Gastrocnemius medialis (tissue), 4 donors: ENCODE measurements at regions of chr5 and their contacts with region 1.

Region 1: GRCh38 chr5:179907570-179908324 is at the start of gene TBC1D9B:
- DNase-seq: peak in 1 of 2 donors; percentile 49
- ATAC-seq: peak; percentile 80 to 84
- H3K4me3 ChIP-seq: peak within 1 kb of the TSS; percentile 65 to 77 (median 68)
- H3K27ac ChIP-seq: peak within 1 kb of the TSS; percentile 78 to 85 (median 82)
- H3K4me1 ChIP-seq: peaks cover 10 to 25% of the 10 kb centered on the region in 2 donors
- H3K27me3 ChIP-seq: no peaks in the 10 kb centered on the region
- CTCF ChIP-seq: peak in 4 of 5 experiments; percentile 70 to 71 (median 70)
- POLR2A ChIP-seq: peak; percentile 40 to 52
- total RNA-seq, gene TBC1D9B: 56.1 to 65.9 (median 62.7) TPM

Region 2: DNA sequence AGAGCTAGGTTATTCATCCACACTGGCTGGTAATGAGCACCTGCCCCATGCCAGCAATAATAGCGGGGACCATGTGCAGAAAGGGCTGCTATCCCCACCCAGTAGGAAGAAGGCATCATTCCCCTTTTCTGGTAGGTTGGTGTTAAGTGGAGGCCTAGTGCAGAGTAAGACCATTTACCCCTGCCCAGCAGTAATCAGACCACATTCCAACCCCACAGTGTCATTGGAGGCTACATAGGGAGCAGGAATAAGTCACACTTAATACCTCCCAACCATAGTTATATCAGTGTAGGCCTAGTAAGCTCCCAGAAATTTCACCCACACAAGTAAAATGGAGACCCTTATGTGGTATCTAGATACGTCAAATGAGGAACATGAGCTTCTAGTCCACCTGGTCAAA is 1017.7 kb before region 1 on chr5:
- in situ Hi-C with region 1: no loop called
- intact Hi-C with region 1: no loop called
- DNase-seq: no peak
- ATAC-seq: no peak
- H3K4me3 ChIP-seq: no peak overlapping the region
- H3K27ac ChIP-seq: no peak overlapping the region
- H3K4me1 ChIP-seq: no peaks in the 10 kb centered on the region
- H3K27me3 ChIP-seq: no peaks in the 10 kb centered on the region
- CTCF ChIP-seq: no peak
- POLR2A ChIP-seq: no peak

Region 3: GRCh38 chr5:179697993-179698934 is 209.5 kb before region 1 on chr5:
- in situ Hi-C with region 1: no loop called
- intact Hi-C with region 1: loop called (anchors 1 kb)
- DNase-seq: peak; percentile 99 to 100
- ATAC-seq: peak; percentile 90 to 96
- H3K4me3 ChIP-seq: peak overlapping the region; percentile 83 to 99 (median 88)
- H3K27ac ChIP-seq: peak overlapping the region; percentile 93 to 100 (median 98)
- H3K4me1 ChIP-seq: peaks cover 21 to 28% of the 10 kb centered on the region in 2 donors
- H3K27me3 ChIP-seq: no peaks in the 10 kb centered on the region
- CTCF ChIP-seq: no peak
- POLR2A ChIP-seq: peak; percentile 90 to 91

Region 4: GRCh38 chr5:179716286-179716685 is 191.5 kb before region 1 on chr5:
- in situ Hi-C with region 1: no loop called
- intact Hi-C with region 1: no loop called
- DNase-seq: no peak
- ATAC-seq: no peak
- H3K4me3 ChIP-seq: no peak overlapping the region
- H3K27ac ChIP-seq: no peak overlapping the region
- H3K4me1 ChIP-seq: no peaks in the 10 kb centered on the region
- H3K27me3 ChIP-seq: no peaks in the 10 kb centered on the region
- CTCF ChIP-seq: no peak
- POLR2A ChIP-seq: no peak

Region 5: DNA sequence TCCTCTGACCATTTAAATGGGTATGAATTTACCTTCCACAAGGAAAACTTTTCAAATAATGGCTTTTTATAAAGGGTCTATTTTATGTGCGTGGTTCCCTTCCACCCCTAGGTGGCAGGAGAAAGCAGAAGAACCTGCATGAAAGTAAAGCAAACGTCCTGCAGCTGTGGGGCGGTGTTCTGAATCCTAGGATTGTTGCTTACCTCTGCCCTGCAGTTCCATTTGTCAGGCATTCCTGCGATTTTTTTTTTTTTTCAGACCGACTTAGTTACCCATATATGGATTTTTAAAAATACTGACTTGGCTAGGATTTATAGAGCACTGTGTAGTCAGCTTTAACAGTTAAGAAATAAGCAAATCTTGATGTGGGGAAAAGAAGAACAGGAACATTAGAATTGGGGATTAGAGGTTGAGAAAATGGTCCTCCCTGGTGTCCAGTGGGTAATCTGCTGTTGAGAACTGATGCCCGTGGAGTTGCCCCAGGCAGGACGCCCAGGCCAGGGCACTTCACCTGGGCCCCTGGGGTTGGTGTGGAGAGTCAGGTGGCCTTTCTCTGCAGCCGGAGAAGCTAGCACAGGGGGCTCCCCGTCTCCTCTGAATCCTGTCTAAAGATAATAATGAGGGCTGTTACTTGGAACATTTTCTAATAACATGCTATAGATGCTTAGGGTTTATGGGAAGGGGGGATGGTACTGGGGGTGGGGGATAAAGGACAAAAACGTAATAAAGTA is 144.4 kb before region 1 on chr5:
- in situ Hi-C with region 1: no loop called
- intact Hi-C with region 1: loop called (anchors 1 kb)
- DNase-seq: peak; percentile 23 to 51
- ATAC-seq: peak; percentile 81 to 82
- H3K4me3 ChIP-seq: no peak overlapping the region
- H3K27ac ChIP-seq: peak overlapping the region; percentile 18 to 48 (median 26)
- H3K4me1 ChIP-seq: peaks cover 56 to 57% of the 10 kb centered on the region in 2 donors
- H3K27me3 ChIP-seq: no peaks in the 10 kb centered on the region
- CTCF ChIP-seq: peak; percentile 68 to 89 (median 74)
- POLR2A ChIP-seq: no peak

Region 6: DNA sequence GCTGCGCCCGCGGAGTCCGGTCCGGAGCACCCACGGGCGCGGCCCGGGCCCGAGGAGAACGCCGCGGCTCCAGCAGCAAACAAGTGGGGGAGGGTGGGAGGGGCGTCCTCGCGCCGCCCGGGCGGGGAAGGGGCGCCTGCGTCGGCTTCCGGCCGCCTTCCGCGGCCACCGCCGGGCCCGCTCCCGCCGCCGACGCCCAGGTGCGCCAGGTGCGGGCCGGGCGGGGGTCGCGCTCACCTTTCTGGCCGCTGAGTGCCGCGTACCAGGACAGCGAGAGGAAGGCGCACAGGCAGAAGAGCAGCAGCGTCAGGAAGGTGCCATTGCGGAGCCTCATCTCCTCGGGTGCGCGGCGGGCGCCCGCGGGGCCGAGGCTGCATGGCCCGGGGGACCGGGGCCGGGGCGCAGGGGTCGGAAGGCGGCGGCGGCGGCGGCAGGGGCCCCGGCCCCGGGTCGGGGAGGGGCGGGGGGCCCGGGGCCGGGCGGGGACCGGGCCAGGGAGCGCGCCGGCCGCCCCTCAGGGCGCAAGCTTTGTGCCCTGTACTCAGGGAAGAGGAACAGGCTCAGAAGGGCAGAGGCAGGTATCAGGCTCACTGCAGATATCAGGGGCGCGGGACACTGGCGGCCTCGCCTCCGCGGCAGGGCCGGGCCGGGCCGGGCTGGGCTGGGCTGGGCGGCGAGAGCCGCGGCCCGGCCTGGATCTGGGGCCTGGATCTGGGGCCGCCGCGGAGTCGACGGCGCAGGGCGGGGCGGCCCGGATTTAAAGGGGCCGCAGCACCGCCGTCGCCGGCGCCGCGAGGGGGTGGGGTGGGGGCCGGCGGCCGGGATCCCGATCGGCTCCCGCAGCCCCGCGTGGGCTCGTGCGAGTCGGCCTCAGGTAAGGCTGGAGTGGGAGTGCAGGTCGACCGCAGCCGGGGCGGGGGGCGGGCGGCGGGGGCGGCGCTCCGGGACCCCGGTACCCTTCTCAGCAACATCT is 101.2 kb before region 1 on chr5 and contains the start of gene MGAT4B:
- in situ Hi-C with region 1: loop called in 1 of 4 experiments (anchors 10 kb)
- intact Hi-C with region 1: loop called (anchors 2 kb)
- DNase-seq: peak; percentile 56 to 69
- ATAC-seq: peak; percentile 72 to 76
- H3K4me3 ChIP-seq: peak within 1 kb of the TSS; percentile 75 to 95 (median 87)
- H3K27ac ChIP-seq: peak within 1 kb of the TSS; percentile 89 to 98 (median 94)
- H3K4me1 ChIP-seq: peaks cover 19 to 36% of the 10 kb centered on the region in 2 donors
- H3K27me3 ChIP-seq: no peaks in the 10 kb centered on the region
- CTCF ChIP-seq: no peak
- POLR2A ChIP-seq: peak; percentile 73
- total RNA-seq, gene MGAT4B: 28.3 to 86.0 (median 61.4) TPM

Region 7: DNA sequence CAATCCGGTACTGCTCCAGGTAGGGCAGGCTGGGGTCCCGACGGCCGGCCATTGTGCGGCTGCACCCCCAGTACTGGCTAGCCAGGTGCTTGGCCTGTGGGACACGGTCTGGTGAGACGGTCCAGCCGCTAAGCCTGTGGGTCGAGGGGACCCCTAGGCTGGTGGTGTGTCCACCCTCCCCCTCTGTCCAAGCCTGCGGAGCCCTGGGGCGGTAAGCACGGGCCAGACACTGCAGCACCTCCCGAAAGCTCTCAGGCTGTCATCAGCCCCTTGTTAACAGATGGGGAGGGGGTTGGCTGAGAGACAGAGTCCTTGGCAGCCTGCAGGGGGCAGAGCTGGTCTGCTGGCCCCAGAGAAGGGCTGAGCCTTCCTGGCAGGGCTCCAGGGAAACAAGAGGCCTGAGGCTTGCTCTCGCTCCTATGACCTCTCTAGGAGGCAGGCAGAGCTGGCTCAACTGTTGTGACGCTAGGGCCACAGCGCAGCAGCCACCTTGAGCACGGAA is 37.3 kb before region 1 on chr5:
- in situ Hi-C with region 1: no loop called
- intact Hi-C with region 1: loop called (anchors 2 kb)
- DNase-seq: peak; percentile 65 to 68
- ATAC-seq: peak; percentile 71 to 79
- H3K4me3 ChIP-seq: no peak overlapping the region
- H3K27ac ChIP-seq: peak overlapping the region in 2 of 4 donors; percentile 24 to 37
- H3K4me1 ChIP-seq: peaks cover 3 to 8% of the 10 kb centered on the region in 2 donors
- H3K27me3 ChIP-seq: no peaks in the 10 kb centered on the region
- CTCF ChIP-seq: peak in 3 of 5 experiments; percentile 25 to 57 (median 55)
- POLR2A ChIP-seq: no peak

Region 8: GRCh38 chr5:180071531-180072255 is 163.9 kb after region 1 on chr5 and contains the start of gene RNF130:
- in situ Hi-C with region 1: loop called in 1 of 4 experiments (anchors 25 kb)
- intact Hi-C with region 1: loop called (anchors 2 kb)
- DNase-seq: peak; percentile 89 to 92
- ATAC-seq: peak; percentile 85 to 87
- H3K4me3 ChIP-seq: peak within 1 kb of the TSS; percentile 75 to 98 (median 84)
- H3K27ac ChIP-seq: peak within 1 kb of the TSS; percentile 91 to 98 (median 98)
- H3K4me1 ChIP-seq: peaks cover 9 to 32% of the 10 kb centered on the region in 2 donors
- H3K27me3 ChIP-seq: no peaks in the 10 kb centered on the region
- CTCF ChIP-seq: no peak
- POLR2A ChIP-seq: peak; percentile 58 to 67
- total RNA-seq, gene RNF130: 34.5 to 79.5 (median 55.6) TPM

Region 9: GRCh38 chr5:180090098-180090768 is 182.5 kb after region 1 on chr5:
- in situ Hi-C with region 1: loop called in 1 of 4 experiments (anchors 25 kb)
- intact Hi-C with region 1: no loop called
- DNase-seq: peak in 1 of 2 donors; percentile 36
- ATAC-seq: peak; percentile 68 to 79
- H3K4me3 ChIP-seq: peak overlapping the region; percentile 55 to 69 (median 62)
- H3K27ac ChIP-seq: peak overlapping the region; percentile 45 to 61 (median 57)
- H3K4me1 ChIP-seq: peaks cover 0 to 13% of the 10 kb centered on the region in 2 donors
- H3K27me3 ChIP-seq: no peaks in the 10 kb centered on the region
- CTCF ChIP-seq: peak; percentile 60 to 90 (median 78)
- POLR2A ChIP-seq: no peak